ENCODE measurements at regions of chr19 and their contacts with region 1.

Region 1: GRCh38 chr19:38004521-38005223 is 97.7 kb downstream of the SIPA1L3 start:
- DNase-seq: peak; percentile 64 to 90
- ATAC-seq: peak; percentile 95 to 98 (median 96)
- H3K4me3 ChIP-seq: peak overlapping the region; percentile 12 to 55 (median 46)
- H3K27ac ChIP-seq: peak overlapping the region; percentile 51 to 92 (median 81)
- H3K4me1 ChIP-seq: peaks cover 9 to 40% (median 29%) of the 10 kb centered on the region in 9 donors
- H3K27me3 ChIP-seq: no peaks in the 10 kb centered on the region
- CTCF ChIP-seq: no peak

Region 2: GRCh38 chr19:37803250-37803854 is 201.3 kb before region 1 on chr19:
- intact Hi-C with region 1: no loop called
- DNase-seq: no peak
- ATAC-seq: no peak
- H3K4me3 ChIP-seq: no peak overlapping the region
- H3K27ac ChIP-seq: no peak overlapping the region
- H3K4me1 ChIP-seq: no peaks in the 10 kb centered on the region
- H3K27me3 ChIP-seq: no peaks in the 10 kb centered on the region
- CTCF ChIP-seq: no peak

Region 3: GRCh38 chr19:37914908-37915307 is 89.8 kb before region 1 on chr19:
- intact Hi-C with region 1: loop called in 1 of 10 experiments (anchors 5 kb)
- DNase-seq: no peak
- ATAC-seq: no peak
- H3K4me3 ChIP-seq: no peak overlapping the region
- H3K27ac ChIP-seq: no peak overlapping the region
- H3K4me1 ChIP-seq: peaks cover 0 to 12% (median 0%) of the 10 kb centered on the region in 9 donors
- H3K27me3 ChIP-seq: no peaks in the 10 kb centered on the region
- CTCF ChIP-seq: no peak

Measured in heart right ventricle (tissue), 16 donors.